ENCODE measurements at regions of chr3 and their contacts with region 1.

Region 1: DNA sequence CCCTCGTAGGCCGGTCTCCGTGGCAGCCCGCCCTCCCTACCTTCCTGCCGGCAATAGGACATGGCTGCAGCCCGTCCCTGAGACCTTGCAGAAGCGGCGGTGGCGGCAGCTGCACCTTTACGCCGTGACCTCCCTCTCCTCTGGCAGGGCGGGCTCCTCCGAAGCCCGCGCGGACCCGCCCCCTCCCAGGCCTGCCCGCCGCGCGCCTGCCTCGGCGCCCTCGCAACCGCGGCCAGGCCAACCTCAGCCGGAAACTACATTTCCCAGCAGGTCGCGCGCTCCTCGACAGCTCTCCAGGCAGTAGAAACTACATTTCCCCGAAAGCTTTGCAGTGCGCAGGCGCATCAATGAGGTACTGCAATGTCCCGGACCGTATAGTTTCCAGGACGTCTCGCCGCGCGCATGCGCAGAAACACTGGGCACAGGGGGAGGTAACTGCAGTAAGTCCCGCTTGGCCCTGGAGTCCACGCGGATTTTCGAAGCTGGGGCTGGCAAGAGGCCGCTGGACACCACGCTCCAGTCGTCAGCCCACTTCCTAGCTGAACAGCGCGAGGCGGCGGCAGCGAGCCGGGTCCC is at the starts of genes CHCHD4 and TMEM43:
- DNase-seq: peak; percentile 99
- ATAC-seq: peak; percentile 79
- H3K4me3 Mint-ChIP-seq: peak within 1 kb of the TSS; percentile 100
- H3K27ac Mint-ChIP-seq: peak within 1 kb of the TSS; percentile 96
- H3K4me1 Mint-ChIP-seq: peaks cover 40% of the 10 kb centered on the region
- H3K27me3 Mint-ChIP-seq: no peaks in the 10 kb centered on the region
- CTCF ChIP-seq: no peak
- total RNA-seq, gene CHCHD4: 20.9 to 27.5 TPM (median 21.4 TPM) in 3 replicates
- total RNA-seq, gene TMEM43: 23.9 to 27.7 TPM (median 24.1 TPM) in 3 replicates

Region 2: DNA sequence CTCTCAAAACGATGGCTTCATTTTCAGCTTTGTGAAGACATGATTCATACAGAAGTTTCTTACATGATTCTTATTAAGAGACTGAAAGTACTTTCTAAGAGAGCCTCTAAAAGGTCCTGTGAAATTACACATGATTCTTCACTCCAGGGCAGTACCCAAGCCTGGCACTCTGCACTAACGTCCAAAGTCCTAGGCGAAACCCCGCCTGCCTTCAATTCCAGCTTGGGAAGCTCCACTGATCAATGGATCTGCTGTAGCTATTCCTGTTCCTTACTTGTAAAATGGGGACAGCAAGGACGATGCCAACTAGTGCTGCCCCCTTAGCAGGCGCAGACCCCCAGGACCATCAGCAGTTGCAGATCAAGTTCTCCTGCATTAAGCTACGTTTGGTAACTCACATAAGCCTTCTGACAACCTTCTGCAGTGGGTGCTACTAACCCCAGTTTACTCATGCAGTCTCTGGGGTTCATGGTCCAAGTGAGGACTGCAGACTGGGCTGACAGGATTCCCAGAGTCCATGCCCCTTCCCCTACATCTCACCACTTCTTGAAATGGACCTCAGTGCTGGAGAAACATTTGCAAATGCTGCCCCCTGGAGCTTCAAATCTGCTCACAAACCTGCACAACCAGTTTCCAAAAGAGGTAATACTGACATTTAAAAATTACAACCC is 10.6 kb before region 1 on chr3:
- CTCF ChIA-PET with region 1: interaction called, 17 read pairs
- POLR2A ChIA-PET with region 1: no interaction called
- DNase-seq: no peak
- ATAC-seq: no peak
- H3K4me3 Mint-ChIP-seq: no peak overlapping the region
- H3K27ac Mint-ChIP-seq: no peak overlapping the region
- H3K4me1 Mint-ChIP-seq: peaks cover 20% of the 10 kb centered on the region
- H3K27me3 Mint-ChIP-seq: no peaks in the 10 kb centered on the region
- CTCF ChIP-seq: no peak